ENCODE measurements at regions of chr15 and their contacts with region 1.

Region 1: DNA sequence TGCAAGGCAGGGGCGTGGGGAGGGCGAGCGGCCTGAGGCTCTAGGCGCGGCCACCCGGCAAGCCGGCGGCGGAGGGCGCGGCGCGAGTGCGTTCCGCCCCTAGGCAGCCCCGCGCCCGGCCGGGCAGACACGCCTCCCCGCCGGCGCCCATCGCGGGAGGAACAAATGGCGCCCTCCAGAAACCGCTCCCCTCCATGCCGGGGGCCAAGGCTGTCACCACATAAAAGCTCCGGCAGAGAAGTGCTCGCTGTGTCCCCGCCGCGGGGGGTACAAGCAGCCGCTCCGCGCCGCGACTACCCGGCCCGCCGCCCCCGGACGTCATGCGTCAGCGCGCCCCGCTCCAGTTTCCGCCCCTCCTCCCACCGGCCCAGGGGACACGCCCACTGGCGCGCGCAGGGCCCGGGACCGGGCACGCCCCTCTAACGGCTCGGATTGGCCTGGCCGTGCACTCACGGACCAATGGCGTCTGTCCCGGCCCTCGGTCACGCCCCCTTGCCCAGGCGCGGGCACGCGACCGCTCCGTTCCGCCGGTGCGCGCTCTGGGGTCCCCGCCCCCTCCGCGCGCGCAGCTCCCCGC is 391 bp upstream of the KLF13 start:
- DNase-seq: peak; percentile 98 to 99
- H3K4me3 ChIP-seq: peak overlapping the region; percentile 70 to 87 (median 85)
- H3K27ac ChIP-seq: peak overlapping the region; percentile 98
- H3K4me1 ChIP-seq: peaks cover 0 to 4% of the 10 kb centered on the region in 2 donors
- H3K27me3 ChIP-seq: no peaks in the 10 kb centered on the region
- CTCF ChIP-seq: peak in 1 of 3 donors; percentile 20
- POLR2A ChIP-seq: peak; percentile 87

Region 2: GRCh38 chr15:29835301-29835700 is 1490.9 kb before region 1 on chr15:
- intact Hi-C with region 1: no loop called
- DNase-seq: no peak
- H3K4me3 ChIP-seq: no peak overlapping the region
- H3K27ac ChIP-seq: no peak overlapping the region
- H3K4me1 ChIP-seq: no peaks in the 10 kb centered on the region
- H3K27me3 ChIP-seq: no peaks in the 10 kb centered on the region
- CTCF ChIP-seq: no peak
- POLR2A ChIP-seq: no peak

Region 3: GRCh38 chr15:31215490-31216214 is 110.6 kb before region 1 on chr15:
- intact Hi-C with region 1: loop called (anchors 2 kb)
- DNase-seq: peak; percentile 71 to 88
- H3K4me3 ChIP-seq: peak overlapping the region; percentile 58 to 84 (median 62)
- H3K27ac ChIP-seq: peak overlapping the region; percentile 91 to 96
- H3K4me1 ChIP-seq: peaks cover 9 to 10% of the 10 kb centered on the region in 2 donors
- H3K27me3 ChIP-seq: no peaks in the 10 kb centered on the region
- CTCF ChIP-seq: peak; percentile 49 to 80 (median 76)
- POLR2A ChIP-seq: no peak

Region 4: DNA sequence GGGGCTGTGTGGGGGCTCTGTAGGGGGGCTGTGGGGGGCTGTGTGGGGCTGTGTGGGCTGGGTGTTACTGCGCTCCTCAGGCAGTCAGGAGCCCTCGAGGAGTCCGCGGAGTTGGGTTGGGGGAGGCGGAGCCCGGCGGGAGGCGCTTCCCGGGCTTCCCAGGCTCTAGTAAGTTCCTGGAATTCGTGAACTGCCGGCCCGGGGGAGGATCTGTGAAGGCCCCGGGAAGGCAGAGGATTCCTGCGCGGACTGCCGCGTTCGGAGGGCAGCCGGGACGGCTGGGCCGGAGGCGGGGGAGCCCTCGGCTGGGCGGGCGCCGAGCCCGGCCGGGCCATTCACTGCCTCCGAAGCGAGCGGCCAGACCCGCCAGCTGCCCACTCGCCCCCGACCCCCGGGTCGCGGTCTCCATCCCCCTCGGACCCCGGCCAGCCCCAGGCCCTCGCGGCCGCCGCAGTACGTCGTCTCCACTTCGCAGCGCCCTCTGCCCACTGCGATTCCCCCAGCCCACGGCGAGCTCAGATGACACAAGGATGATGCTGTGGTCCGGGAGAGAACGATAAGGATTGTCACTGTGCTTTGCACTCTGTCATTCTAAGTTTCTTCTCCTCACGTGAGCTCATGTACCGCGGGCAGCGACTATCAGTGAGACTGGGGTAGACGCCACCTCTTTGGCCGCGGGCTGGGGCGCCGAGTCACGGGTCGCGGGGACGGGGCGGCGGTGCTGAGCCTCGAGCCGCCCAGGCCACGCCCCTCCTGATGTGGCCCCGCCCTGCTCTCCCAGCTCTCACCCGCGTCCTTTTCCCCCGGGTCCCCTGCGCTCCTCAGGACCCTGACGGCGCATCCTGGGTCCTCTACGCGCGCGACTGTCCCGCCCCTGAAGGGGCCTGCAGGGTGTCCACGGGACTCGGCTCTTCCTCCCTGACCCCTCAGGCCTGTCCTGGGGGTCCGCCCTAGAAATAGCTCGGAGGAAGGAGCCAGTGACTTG is 65.7 kb after region 1 on chr15:
- intact Hi-C with region 1: loop called (anchors 10 kb)
- DNase-seq: peak in 1 of 2 donors; percentile 72
- H3K4me3 ChIP-seq: peak overlapping the region; percentile 57 to 79 (median 69)
- H3K27ac ChIP-seq: peak overlapping the region; percentile 91 to 97
- H3K4me1 ChIP-seq: no peaks in the 10 kb centered on the region
- H3K27me3 ChIP-seq: no peaks in the 10 kb centered on the region
- CTCF ChIP-seq: peak in 2 of 3 donors; percentile 9 to 11
- POLR2A ChIP-seq: peak; percentile 87

Region 5: GRCh38 chr15:31977812-31978661 is 651.8 kb after region 1 on chr15:
- intact Hi-C with region 1: loop called (anchors 5 kb)
- DNase-seq: no peak
- H3K4me3 ChIP-seq: no peak overlapping the region
- H3K27ac ChIP-seq: no peak overlapping the region
- H3K4me1 ChIP-seq: no peaks in the 10 kb centered on the region
- H3K27me3 ChIP-seq: peaks cover 0 to 24% of the 10 kb centered on the region in 2 donors
- CTCF ChIP-seq: peak; percentile 48 to 68 (median 61)
- POLR2A ChIP-seq: no peak

Measured in breast epithelium (tissue), 4 donors.